GM12878 (cell line): ENCODE measurements at regions of chr4 and their contacts with region 1.

Region 1: DNA sequence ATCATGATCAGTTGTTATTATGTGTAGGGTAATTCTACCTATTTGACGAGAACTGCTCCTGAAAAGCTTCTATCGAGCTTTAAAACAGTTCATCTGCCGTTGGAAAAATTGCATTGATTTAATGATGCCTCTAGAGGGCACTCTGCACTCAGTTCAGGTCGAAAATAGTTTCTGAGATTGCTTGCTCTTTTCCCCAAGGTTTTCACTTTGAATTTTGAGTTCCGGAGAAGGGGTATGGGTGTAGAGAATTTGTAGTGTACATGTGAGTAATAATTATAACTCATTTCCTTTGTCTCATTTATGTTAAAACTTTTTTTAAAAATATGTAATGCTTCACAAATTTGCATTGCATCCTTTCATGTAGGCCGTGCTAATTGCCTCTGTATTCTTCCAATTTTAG is 28.4 kb upstream of the TNIP3 start:
- DNase-seq: peak; percentile 39
- ATAC-seq: peak; percentile 43
- H3K4me3 ChIP-seq: no peak overlapping the region
- H3K27ac ChIP-seq: no peak overlapping the region
- H3K4me1 ChIP-seq: peaks cover 4% of the 10 kb centered on the region
- H3K27me3 ChIP-seq: no peaks in the 10 kb centered on the region
- CTCF ChIP-seq: peak; percentile 65 to 84 (median 77); a peak in 5 of 6 replicates
- EP300 ChIP-seq: no peak
- POLR2A ChIP-seq: no peak
- RAD21 ChIP-seq: peak; percentile 99

Region 2: DNA sequence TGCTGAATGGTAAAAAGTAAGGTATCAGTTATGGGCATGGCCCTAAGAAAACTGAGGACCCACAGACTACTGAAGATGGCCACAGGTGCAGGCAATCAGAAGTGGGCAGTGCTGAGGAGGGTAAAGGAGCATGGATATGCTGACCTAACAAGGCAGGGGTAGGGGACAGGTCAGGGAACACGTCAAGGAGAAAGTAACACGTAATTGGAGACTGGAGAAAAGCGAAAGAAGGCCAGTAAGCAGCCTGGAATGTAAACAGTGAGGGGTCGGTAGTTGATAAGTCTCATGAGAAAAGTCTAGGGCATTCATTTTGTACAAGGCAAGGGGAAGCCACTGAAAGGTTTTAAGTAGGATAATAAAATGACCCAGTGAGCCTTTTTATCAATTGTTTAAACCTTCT is 423.3 kb before region 1 on chr4:
- CTCF ChIA-PET with region 1: no interaction called
- POLR2A ChIA-PET with region 1: no interaction called
- RAD21 ChIA-PET with region 1: no interaction called
- SMC1A ChIA-PET with region 1: no interaction called
- in situ Hi-C with region 1: no loop called
- intact Hi-C with region 1: no loop called
- DNase-seq: no peak
- ATAC-seq: no peak
- H3K4me3 ChIP-seq: no peak overlapping the region
- H3K27ac ChIP-seq: no peak overlapping the region
- H3K4me1 ChIP-seq: no peaks in the 10 kb centered on the region
- H3K27me3 ChIP-seq: no peaks in the 10 kb centered on the region; a peak in 1 of 4 replicates
- CTCF ChIP-seq: no peak
- EP300 ChIP-seq: no peak
- POLR2A ChIP-seq: no peak
- RAD21 ChIP-seq: no peak

Region 3: DNA sequence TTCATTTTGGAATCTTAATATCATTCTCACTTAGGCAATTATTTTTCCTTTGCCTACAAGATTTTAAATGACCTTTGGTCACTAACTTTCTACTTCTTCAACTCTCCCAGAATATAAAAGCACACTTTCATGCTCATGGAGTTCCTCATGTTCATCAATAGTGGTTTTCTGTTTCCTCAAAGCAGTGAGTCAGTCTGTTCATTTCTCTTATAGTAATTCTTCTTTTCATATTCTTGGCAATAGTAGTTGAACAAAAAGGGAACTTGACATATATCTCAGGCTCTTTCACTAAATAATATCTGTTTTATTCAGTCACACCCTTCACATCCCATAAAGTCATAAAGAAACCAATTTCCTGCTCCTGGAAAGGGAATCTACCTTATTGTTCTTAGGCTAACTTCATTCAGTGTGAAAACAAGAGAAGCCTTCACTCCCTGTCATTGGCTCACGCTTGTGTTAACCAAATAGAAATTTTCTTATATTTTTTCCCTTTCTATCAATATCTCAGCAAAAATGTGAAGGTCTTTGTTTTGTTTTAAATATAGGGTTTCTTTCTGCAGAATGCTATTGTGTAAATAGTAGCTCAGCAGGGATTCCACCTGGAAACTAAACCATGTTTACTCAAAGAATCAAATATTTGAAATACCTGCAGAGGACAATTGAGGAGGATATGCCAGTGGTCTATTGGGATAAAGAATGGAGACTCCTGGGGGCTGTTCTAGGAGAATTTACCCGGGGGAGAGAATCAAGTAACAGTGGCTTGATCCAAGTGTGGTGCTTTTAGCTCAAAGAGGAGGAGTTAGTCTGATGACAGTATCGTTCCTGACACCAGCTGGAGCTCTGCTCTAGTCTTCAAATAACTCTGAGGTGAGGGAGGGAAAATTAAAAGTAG is 15.0 kb before region 1 on chr4:
- CTCF ChIA-PET with region 1: interaction called, 18 read pairs
- POLR2A ChIA-PET with region 1: no interaction called
- RAD21 ChIA-PET with region 1: no interaction called
- SMC1A ChIA-PET with region 1: interaction called, 6 read pairs
- in situ Hi-C with region 1: no loop called
- intact Hi-C with region 1: no loop called
- DNase-seq: no peak
- ATAC-seq: no peak
- H3K4me3 ChIP-seq: no peak overlapping the region
- H3K27ac ChIP-seq: no peak overlapping the region
- H3K4me1 ChIP-seq: no peaks in the 10 kb centered on the region; the same call in 1 of the 2 replicates
- H3K27me3 ChIP-seq: no peaks in the 10 kb centered on the region; a peak in 2 of 4 replicates
- CTCF ChIP-seq: no peak
- EP300 ChIP-seq: no peak
- POLR2A ChIP-seq: no peak
- RAD21 ChIP-seq: no peak

Region 4: GRCh38 chr4:121219227-121219626 is 26.7 kb after region 1 on chr4:
- CTCF ChIA-PET with region 1: interaction called, 19 read pairs
- POLR2A ChIA-PET with region 1: no interaction called
- RAD21 ChIA-PET with region 1: interaction called, 6 read pairs
- SMC1A ChIA-PET with region 1: interaction called, 3 read pairs
- in situ Hi-C with region 1: no loop called
- intact Hi-C with region 1: no loop called
- DNase-seq: no peak
- ATAC-seq: no peak
- H3K4me3 ChIP-seq: no peak overlapping the region
- H3K27ac ChIP-seq: no peak overlapping the region
- H3K4me1 ChIP-seq: no peaks in the 10 kb centered on the region
- H3K27me3 ChIP-seq: no peaks in the 10 kb centered on the region
- CTCF ChIP-seq: no peak
- EP300 ChIP-seq: no peak
- POLR2A ChIP-seq: no peak
- RAD21 ChIP-seq: no peak

Region 5: GRCh38 chr4:121227341-121227792 is 34.9 kb after region 1 on chr4:
- CTCF ChIA-PET with region 1: interaction called, 19 read pairs
- POLR2A ChIA-PET with region 1: no interaction called
- RAD21 ChIA-PET with region 1: interaction called, 6 read pairs
- SMC1A ChIA-PET with region 1: interaction called, 9 read pairs
- in situ Hi-C with region 1: no loop called
- intact Hi-C with region 1: no loop called
- DNase-seq: peak; percentile 24
- ATAC-seq: peak; percentile 90
- H3K4me3 ChIP-seq: no peak overlapping the region
- H3K27ac ChIP-seq: no peak overlapping the region; the same call in 1 of the 2 replicates
- H3K4me1 ChIP-seq: no peaks in the 10 kb centered on the region
- H3K27me3 ChIP-seq: no peaks in the 10 kb centered on the region
- CTCF ChIP-seq: 0 out of 6 replicates have a peak, but pooled peaks of 1 of the 3 experiments have one; percentile 17
- EP300 ChIP-seq: no peak
- POLR2A ChIP-seq: no peak
- RAD21 ChIP-seq: no peak

Region 6: DNA sequence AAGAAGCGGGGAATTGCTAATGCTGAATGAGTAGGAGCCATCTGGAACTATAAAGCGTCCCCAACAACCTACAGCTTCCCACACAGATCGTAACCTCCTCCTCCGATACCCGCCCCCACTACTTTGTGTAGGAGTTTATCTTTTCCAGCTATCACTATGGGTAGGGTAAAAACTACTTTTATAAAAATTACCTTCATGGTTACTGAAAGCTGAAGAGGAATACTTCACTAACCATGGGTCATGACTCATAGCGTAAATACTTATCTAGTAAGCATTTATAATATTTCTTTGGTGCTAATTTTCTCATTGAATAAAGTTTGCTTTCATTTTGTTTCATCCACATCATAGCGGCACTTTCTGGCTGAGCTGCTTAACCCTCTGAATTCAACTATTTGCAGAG is 51.0 kb after region 1 on chr4:
- CTCF ChIA-PET with region 1: interaction called, 225 read pairs
- POLR2A ChIA-PET with region 1: no interaction called
- RAD21 ChIA-PET with region 1: interaction called, 10 read pairs
- SMC1A ChIA-PET with region 1: interaction called, 121 read pairs
- in situ Hi-C with region 1: no loop called
- intact Hi-C with region 1: no loop called
- DNase-seq: no peak
- ATAC-seq: peak; percentile 63
- H3K4me3 ChIP-seq: no peak overlapping the region
- H3K27ac ChIP-seq: no peak overlapping the region
- H3K4me1 ChIP-seq: no peaks in the 10 kb centered on the region
- H3K27me3 ChIP-seq: no peaks in the 10 kb centered on the region; a peak in 1 of 4 replicates
- CTCF ChIP-seq: no peak
- EP300 ChIP-seq: no peak
- POLR2A ChIP-seq: no peak
- RAD21 ChIP-seq: no peak

Region 7: GRCh38 chr4:121252224-121252806 is 59.8 kb after region 1 on chr4:
- CTCF ChIA-PET with region 1: interaction called, 225 read pairs
- POLR2A ChIA-PET with region 1: interaction called, 4 read pairs
- RAD21 ChIA-PET with region 1: interaction called, 53 read pairs
- SMC1A ChIA-PET with region 1: interaction called, 121 read pairs
- in situ Hi-C with region 1: loop called (anchors 5 kb)
- intact Hi-C with region 1: loop called (anchors 1 kb)
- DNase-seq: no peak
- ATAC-seq: peak; percentile 54
- H3K4me3 ChIP-seq: no peak overlapping the region
- H3K27ac ChIP-seq: no peak overlapping the region
- H3K4me1 ChIP-seq: peaks cover 7% of the 10 kb centered on the region
- H3K27me3 ChIP-seq: no peaks in the 10 kb centered on the region
- CTCF ChIP-seq: peak; percentile 77 to 81 (median 81)
- EP300 ChIP-seq: no peak
- POLR2A ChIP-seq: no peak
- RAD21 ChIP-seq: peak; percentile 77

Region 8: DNA sequence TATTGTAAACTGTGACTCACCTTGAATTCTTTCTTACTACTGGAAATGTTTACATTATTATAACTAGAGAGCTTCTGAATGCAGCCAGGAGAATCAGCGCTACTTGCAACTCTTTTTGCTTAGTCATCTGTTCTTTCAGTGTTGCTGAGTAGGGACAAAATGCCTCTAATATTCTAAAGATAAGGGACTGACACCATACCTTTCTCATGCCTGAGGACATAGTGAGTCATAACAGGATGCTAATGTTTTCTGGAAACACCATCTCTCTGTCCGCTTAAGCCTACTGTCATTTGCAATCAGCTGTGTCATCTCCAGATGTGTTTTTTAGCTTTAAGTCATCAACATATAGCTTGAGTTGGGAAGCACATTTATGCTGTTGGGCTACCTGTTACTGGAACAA is 80.0 kb after region 1 on chr4:
- CTCF ChIA-PET with region 1: interaction called, 21 read pairs
- POLR2A ChIA-PET with region 1: no interaction called
- RAD21 ChIA-PET with region 1: no interaction called
- SMC1A ChIA-PET with region 1: interaction called, 3 read pairs
- in situ Hi-C with region 1: no loop called
- intact Hi-C with region 1: no loop called
- DNase-seq: no peak
- ATAC-seq: peak; percentile 59
- H3K4me3 ChIP-seq: no peak overlapping the region
- H3K27ac ChIP-seq: no peak overlapping the region
- H3K4me1 ChIP-seq: no peaks in the 10 kb centered on the region
- H3K27me3 ChIP-seq: no peaks in the 10 kb centered on the region
- CTCF ChIP-seq: no peak
- EP300 ChIP-seq: no peak
- POLR2A ChIP-seq: no peak
- RAD21 ChIP-seq: no peak

Region 9: DNA sequence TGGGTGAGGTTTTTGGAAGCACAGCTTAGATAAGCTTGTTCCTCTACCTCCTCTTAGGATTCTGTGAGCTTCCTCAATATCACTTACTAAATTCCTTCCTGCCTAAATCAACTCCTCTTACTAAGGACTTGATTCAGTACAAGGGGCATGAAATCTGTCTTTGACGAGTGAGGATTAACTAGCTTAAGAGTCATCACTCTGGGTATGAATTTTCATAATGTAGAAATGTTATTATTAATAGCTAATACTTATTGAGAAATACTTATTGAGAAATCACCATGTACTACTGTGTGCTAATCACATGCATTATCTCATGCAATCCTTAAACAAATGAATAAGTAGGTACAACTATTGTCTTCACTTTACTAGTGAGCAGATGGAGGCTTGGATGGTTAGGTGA is 730.8 kb after region 1 on chr4:
- CTCF ChIA-PET with region 1: no interaction called
- POLR2A ChIA-PET with region 1: no interaction called
- RAD21 ChIA-PET with region 1: no interaction called
- SMC1A ChIA-PET with region 1: no interaction called
- in situ Hi-C with region 1: no loop called
- intact Hi-C with region 1: no loop called
- DNase-seq: no peak
- ATAC-seq: no peak
- H3K4me3 ChIP-seq: no peak overlapping the region
- H3K27ac ChIP-seq: no peak overlapping the region
- H3K4me1 ChIP-seq: no peaks in the 10 kb centered on the region
- H3K27me3 ChIP-seq: no peaks in the 10 kb centered on the region
- CTCF ChIP-seq: no peak
- EP300 ChIP-seq: no peak
- POLR2A ChIP-seq: no peak
- RAD21 ChIP-seq: no peak